ENCODE measurements at regions of chr21 and their contacts with region 1.

Region 1: DNA sequence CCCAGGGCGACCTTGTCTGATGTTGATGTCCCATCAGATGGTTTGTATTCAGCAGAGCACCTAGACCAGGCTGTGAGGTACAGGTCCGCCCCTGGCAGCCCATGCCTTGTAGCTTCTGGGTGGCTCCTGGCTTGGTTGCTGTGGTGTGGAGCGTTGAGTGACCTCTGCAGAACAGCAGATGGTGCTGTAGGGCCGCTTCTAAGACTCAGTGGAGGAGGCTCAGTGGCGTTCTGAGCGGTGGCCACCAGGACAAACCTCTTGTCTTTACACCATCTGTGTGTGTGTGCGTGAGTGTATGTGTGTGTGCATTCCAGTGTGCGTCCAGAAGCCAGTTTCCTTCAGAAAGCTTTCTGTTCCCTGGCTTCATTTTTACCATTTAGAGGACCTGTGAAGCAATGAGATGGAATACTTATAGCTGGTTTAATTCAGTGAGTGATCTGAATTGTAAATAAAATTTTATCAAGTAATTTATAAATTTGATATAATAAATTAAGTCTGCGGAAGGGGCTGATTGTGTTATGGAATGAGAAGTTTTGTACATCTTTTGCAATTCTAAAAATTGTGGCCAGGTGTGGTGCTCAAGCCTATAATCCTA is 66.1 kb downstream of the ADARB1 start:
- DNase-seq: peak; percentile 78
- H3K4me3 ChIP-seq: no peak overlapping the region
- CTCF ChIP-seq: peak; percentile 98

Region 2: GRCh38 chr21:44873356-44874239 is 266.8 kb before region 1 on chr21 and contains the start of gene PTTG1IP:
- CTCF ChIA-PET with region 1: interaction called, 11 read pairs
- POLR2A ChIA-PET with region 1: no interaction called
- DNase-seq: peak; percentile 46
- H3K4me3 ChIP-seq: peak within 1 kb of the TSS; percentile 83
- CTCF ChIP-seq: no peak

Region 3: GRCh38 chr21:45021428-45022347 is 118.8 kb before region 1 on chr21:
- CTCF ChIA-PET with region 1: interaction called, 11 read pairs
- POLR2A ChIA-PET with region 1: no interaction called
- DNase-seq: no peak
- H3K4me3 ChIP-seq: no peak overlapping the region
- CTCF ChIP-seq: no peak

Region 4: GRCh38 chr21:45120975-45121374 is 19.5 kb before region 1 on chr21:
- CTCF ChIA-PET with region 1: interaction called, 153 read pairs
- POLR2A ChIA-PET with region 1: no interaction called
- DNase-seq: no peak
- H3K4me3 ChIP-seq: no peak overlapping the region
- CTCF ChIP-seq: no peak

Region 5: DNA sequence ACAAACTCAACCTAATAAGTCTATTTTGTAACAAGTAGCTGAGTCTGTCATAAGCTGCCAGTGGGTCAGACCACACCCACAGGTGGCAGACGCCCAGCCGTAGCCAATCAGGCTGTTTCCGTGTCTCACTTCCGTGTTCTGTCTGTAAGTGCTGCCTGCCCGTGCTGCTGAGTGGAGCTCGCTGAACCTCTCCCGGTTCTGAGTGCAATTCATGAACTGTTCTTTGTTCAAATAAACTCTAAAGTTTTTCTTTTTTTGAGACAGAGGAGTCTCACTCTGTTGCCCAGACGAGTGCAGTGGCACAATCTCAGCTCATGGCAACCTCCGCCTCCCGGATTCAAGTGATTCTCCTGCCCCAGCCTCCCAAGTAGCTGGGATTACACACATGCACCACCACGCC is 122.2 kb after region 1 on chr21:
- CTCF ChIA-PET with region 1: interaction called, 11 read pairs
- POLR2A ChIA-PET with region 1: no interaction called
- DNase-seq: no peak
- H3K4me3 ChIP-seq: no peak overlapping the region
- CTCF ChIP-seq: no peak

Region 6: DNA sequence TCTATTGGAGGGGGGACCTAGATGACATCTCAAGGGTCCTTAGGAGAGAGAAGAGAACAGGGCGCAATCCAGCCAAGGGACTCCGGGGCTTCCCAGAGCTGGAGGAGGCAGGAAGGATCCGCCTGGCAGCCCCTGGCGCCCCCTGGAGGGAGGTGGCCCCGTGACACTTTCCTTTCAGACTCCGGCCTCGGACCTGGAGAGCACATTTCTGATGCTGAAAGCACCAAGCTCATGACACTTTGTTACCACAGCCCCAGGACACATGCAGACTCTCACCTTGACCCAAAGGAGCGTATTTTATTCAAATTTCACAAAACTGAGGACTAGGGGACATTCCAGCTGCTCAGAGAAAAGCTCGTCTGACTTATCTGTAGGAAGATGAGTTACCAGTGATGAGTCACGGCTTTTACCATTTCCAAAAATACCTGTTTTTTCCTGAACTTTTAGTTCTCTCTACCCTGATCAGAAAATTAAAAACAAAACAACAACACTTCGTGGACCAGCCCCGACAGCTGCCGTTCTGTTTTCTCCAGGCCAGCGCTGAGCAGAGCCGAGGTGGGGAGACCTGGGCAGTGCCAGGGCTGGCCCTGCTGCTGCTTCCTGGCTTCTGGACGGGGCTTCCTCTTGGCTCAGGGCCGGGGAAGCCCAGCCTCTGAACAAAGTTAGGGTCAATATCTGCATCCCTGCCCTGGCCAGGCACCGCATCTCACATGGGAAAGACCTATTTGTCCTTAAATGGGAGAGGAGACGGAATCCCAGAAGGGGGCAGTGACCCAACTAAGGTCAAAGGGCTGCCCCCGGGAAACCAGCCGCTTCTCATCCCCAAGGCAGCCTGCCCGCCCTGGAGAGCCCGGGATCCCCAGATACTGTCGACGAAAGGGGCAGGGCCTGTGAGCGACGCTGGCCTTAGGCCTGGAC is 168.9 kb after region 1 on chr21:
- CTCF ChIA-PET with region 1: interaction called, 16 read pairs
- POLR2A ChIA-PET with region 1: no interaction called
- DNase-seq: no peak
- H3K4me3 ChIP-seq: no peak overlapping the region
- CTCF ChIP-seq: peak; percentile 89

Region 7: DNA sequence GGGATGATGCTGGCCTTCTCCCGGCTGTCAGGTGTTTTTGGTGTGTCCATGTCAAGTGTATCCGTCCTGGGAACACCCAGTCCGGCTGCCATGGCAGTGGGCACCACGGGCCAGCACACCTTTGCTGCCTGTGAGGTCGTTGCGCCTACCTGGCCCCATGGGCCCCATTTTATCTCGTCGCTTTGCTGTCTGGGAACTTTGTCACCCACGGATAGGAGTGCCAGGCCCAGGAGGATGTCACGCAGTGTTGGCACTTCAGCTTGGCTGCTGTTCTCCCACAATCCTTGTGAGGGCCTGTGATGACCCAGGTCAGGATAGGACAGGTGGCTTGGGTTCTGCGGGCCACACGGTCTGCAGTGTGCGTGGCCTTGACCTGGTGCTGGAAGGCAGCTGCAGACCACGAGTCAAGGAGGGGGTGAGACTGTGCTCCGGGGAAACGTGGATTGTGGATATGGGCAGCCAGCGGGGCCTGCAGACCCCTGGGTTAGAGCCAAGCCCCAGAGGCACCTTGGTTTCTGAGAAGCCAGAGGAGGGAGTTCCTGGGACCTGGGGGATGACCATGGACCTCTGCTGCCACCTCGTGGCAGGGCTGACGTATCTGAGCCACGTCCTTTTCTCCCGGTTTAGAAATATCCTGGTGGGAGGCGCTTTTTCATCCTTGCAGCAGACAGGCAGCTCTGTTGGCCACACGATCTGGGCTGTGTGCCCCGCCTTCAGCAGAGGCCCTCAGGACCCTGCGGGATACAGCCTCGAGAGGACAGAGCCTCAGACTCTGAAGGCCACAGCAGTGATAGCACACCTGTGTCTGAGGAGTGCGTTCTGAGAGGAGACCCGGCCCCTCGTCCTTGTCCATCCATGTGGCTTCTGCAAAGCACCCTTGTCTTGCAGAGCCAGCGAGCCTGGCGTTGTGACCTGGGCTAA is 680.0 kb after region 1 on chr21:
- CTCF ChIA-PET with region 1: interaction called, 36 read pairs
- POLR2A ChIA-PET with region 1: no interaction called
- DNase-seq: peak; percentile 50
- H3K4me3 ChIP-seq: no peak overlapping the region
- CTCF ChIP-seq: peak; percentile 87